Activated CD8-positive, alpha-beta memory T cell treated with anti-CD3 and anti-CD28 coated beads, Interleukin-2, amount 10 ng/mL, durations not matched to agents 7 days and 5 days (primary cell): ENCODE measurements at regions of chr11 and their contacts with region 1.

Region 1: GRCh38 chr11:130861902-130862860 is 54.1 kb downstream of the SNX19 start:
- DNase-seq: peak; percentile 91
- ATAC-seq: peak; percentile 94
- H3K4me3 Mint-ChIP-seq: no peak overlapping the region
- H3K27ac Mint-ChIP-seq: no peak overlapping the region
- H3K4me1 Mint-ChIP-seq: no peaks in the 10 kb centered on the region
- H3K27me3 Mint-ChIP-seq: peaks cover under 1% of the 10 kb centered on the region

Region 2: DNA sequence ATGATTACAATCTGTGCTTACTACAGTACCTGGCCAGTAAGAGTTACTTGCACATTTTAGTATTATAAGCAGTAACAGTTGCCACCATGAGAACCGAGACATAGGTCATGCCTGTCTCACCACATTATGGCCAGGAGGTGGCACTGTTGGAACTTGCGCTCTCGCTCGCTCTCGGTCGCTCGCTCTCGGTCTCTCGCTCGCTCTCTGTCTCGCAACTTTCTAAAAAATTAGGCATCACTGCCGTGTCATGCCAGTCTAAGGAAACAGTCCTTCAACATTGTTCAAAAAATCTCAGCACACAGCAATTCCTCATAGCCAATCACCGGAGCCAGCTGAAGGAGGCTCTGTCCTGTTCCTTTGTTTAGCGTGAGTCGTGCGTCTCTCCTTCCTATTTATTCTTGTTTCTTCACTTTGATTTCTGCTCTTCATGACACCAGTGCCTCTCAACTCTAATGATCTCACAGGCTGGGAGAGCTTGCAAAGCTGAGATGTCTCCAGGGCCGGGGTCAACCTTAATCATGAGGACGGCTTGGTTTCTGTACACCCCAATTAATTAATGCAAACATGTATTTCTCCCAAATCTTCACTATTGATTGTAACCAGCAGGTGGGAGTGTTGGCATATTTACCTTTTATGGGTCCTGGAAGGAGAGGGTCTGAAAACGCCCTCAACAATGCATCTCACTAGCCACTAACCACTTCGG is 427.5 kb before region 1 on chr11:
- CTCF ChIA-PET with region 1: interaction called, 286 read pairs
- DNase-seq: peak; percentile 81
- ATAC-seq: peak; percentile 82
- H3K4me3 Mint-ChIP-seq: no peak overlapping the region
- H3K27ac Mint-ChIP-seq: no peak overlapping the region
- H3K4me1 Mint-ChIP-seq: peaks cover 31% of the 10 kb centered on the region
- H3K27me3 Mint-ChIP-seq: peaks cover 34% of the 10 kb centered on the region

Region 3: GRCh38 chr11:130827451-130828377 is 34.5 kb before region 1 on chr11:
- CTCF ChIA-PET with region 1: interaction called, 17 read pairs
- DNase-seq: peak; percentile 48
- ATAC-seq: peak; percentile 51
- H3K4me3 Mint-ChIP-seq: no peak overlapping the region
- H3K27ac Mint-ChIP-seq: no peak overlapping the region
- H3K4me1 Mint-ChIP-seq: no peaks in the 10 kb centered on the region
- H3K27me3 Mint-ChIP-seq: peaks cover 5% of the 10 kb centered on the region

Region 4: DNA sequence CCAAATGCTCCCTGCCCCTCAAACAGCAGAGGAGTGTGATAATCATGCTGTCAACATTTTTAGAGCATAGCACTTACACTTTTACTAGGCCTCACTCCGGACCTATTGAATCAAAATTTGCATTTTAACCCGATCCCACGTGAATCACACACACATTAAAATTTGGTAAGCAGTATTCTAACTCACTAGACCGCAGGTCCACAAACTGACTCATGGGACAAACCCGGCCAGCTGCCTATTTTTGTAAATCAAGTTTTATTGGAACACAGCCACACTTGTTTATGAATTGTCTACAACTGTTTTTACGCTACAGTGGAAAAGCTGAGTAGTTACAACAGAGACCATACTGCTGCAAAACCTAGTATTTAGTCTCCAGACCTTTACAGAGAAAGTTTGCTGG is 10.8 kb after region 1 on chr11:
- CTCF ChIA-PET with region 1: interaction called, 26 read pairs
- DNase-seq: no peak
- ATAC-seq: no peak
- H3K4me3 Mint-ChIP-seq: no peak overlapping the region
- H3K27ac Mint-ChIP-seq: no peak overlapping the region
- H3K4me1 Mint-ChIP-seq: no peaks in the 10 kb centered on the region
- H3K27me3 Mint-ChIP-seq: no peaks in the 10 kb centered on the region

Region 5: DNA sequence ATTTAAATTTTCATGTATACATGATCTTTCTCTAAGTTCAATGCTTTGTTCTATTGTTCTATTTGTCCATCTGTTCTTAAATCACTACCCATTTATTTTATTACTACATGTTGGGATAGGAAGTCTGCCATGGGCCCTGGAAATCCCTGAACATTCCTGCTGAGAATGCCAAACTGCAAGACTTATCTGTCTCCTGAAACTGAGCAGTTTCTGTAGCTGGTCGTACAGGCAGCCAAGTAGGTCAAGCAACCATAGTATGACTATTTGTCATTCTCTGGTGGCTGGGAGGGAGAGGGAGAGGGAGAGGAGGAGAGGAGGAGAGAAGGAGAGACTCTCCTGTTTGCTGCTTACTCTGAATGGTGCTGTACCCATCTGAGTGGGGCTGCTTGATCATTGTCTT is 136.9 kb after region 1 on chr11:
- CTCF ChIA-PET with region 1: no interaction called
- DNase-seq: no peak
- ATAC-seq: no peak
- H3K4me3 Mint-ChIP-seq: no peak overlapping the region
- H3K27ac Mint-ChIP-seq: no peak overlapping the region
- H3K4me1 Mint-ChIP-seq: no peaks in the 10 kb centered on the region
- H3K27me3 Mint-ChIP-seq: no peaks in the 10 kb centered on the region